Activated CD4-positive, alpha-beta T cell treated with anti-CD3 and anti-CD28 coated beads for 36 hours (primary cell): ENCODE measurements at regions of chr4 and their contacts with region 1.

Region 1: DNA sequence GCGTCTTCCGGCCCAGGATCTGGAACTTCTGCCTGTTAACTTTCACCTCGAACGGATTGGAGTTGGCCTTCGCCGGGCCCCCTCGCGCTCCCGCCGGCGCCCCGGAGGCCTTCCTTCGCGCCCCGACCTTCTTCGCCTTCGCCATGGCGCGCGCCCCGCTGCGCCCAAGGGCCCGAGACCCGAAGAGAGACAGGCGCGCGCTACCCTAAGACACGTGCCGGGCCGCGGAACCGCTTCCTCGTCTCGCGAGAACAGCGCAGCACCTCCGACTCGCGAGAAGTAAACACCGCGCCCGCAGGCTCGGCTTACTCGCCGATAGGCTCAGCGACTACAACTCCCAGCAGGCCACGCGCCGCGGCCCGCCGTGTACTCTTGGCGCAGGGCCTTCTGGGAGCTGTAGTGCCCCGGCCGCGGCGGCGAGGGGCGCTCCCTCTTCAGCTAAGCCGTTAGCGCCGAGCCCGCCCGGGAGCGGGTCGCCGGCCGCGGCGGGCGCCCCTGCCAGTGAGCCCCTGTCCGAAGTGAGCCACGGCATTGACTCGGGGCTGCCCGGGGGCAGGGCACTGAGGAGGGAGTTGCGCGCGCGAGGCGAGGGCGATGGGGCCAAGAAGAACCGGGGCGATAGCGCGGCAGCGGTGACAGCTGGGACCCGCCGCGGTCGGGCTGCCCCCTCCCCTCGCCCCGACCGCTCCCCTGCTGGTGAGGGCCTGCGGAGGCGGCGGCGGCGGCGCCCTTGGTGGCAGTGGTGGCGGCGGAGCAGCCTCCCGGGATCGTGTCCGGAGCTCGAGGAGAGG is at the starts of genes GRK4 and NOP14:
- DNase-seq: peak; percentile 99
- ATAC-seq: peak; percentile 87
- H3K4me3 Mint-ChIP-seq: peak within 1 kb of the TSS; percentile 83
- H3K27ac Mint-ChIP-seq: peak within 1 kb of the TSS; percentile 86
- H3K4me1 Mint-ChIP-seq: peaks cover 34% of the 10 kb centered on the region
- H3K27me3 Mint-ChIP-seq: no peaks in the 10 kb centered on the region
- total RNA-seq, gene GRK4: 2.4 to 2.5 TPM
- total RNA-seq, gene NOP14: 86.8 to 106 TPM

Region 2: DNA sequence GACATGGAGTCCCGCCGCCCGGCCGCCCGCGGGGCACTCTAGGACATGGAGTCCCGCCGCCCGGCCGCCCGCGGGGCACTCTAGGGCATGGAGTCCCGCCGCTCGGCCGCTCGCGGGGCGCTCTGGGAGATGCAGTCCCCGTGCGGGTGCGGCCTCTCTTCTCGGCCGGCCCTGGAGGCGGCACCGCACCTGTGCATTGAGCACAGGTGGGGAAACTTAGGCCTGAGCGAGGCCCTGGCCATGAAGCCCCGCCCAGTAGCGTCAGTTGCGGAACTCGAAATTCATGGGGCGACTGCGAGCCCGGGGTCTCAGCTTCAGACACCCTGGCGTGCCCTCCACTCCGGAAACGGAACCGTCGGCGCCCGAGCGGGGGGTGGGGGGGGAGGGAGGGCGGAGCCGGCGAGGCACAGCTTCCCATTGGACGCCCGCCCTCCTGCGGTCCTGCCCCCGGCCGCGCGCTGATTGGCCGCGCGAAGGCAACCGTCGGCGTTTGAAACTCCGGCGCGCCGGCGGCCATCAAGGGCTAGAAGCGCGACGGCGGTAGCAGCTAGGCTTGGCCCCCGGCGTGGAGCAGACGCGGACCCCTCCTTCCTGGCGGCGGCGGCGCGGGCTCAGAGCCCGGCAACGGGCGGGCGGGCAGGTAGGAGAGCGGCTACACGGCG is 1242.2 kb before region 1 on chr4 and contains the starts of genes TACC3 and TMEM129:
- CTCF ChIA-PET with region 1: no interaction called
- POLR2A ChIA-PET with region 1: no interaction called
- intact Hi-C with region 1: loop called in 1 of 2 experiments (anchors 5 kb)
- DNase-seq: peak; percentile 96
- ATAC-seq: peak; percentile 81
- H3K4me3 Mint-ChIP-seq: peak within 1 kb of the TSS; percentile 96
- H3K27ac Mint-ChIP-seq: peak within 1 kb of the TSS; percentile 99
- H3K4me1 Mint-ChIP-seq: peaks cover 52% of the 10 kb centered on the region
- H3K27me3 Mint-ChIP-seq: no peaks in the 10 kb centered on the region
- total RNA-seq, gene TACC3: 197 to 206 TPM
- total RNA-seq, gene TMEM129: 13.7 to 14.6 TPM

Region 3: GRCh38 chr4:2262143-2262943 is 701.0 kb before region 1 on chr4:
- CTCF ChIA-PET with region 1: no interaction called
- POLR2A ChIA-PET with region 1: no interaction called
- intact Hi-C with region 1: loop called in 1 of 2 experiments (anchors 5 kb)
- DNase-seq: peak; percentile 99
- ATAC-seq: peak; percentile 96
- H3K4me3 Mint-ChIP-seq: peak overlapping the region; percentile 61
- H3K27ac Mint-ChIP-seq: no peak overlapping the region
- H3K4me1 Mint-ChIP-seq: peaks cover 2% of the 10 kb centered on the region
- H3K27me3 Mint-ChIP-seq: no peaks in the 10 kb centered on the region

Region 4: GRCh38 chr4:2745981-2746806 is 217.2 kb before region 1 on chr4:
- CTCF ChIA-PET with region 1: no interaction called
- POLR2A ChIA-PET with region 1: interaction called, 8 read pairs
- intact Hi-C with region 1: loop called in 1 of 2 experiments (anchors 1 kb)
- DNase-seq: peak; percentile 98
- ATAC-seq: peak; percentile 97
- H3K4me3 Mint-ChIP-seq: peak overlapping the region; percentile 62
- H3K27ac Mint-ChIP-seq: peak overlapping the region; percentile 97
- H3K4me1 Mint-ChIP-seq: peaks cover 58% of the 10 kb centered on the region
- H3K27me3 Mint-ChIP-seq: no peaks in the 10 kb centered on the region

Region 5: GRCh38 chr4:2849267-2850152 is 113.9 kb before region 1 on chr4:
- CTCF ChIA-PET with region 1: interaction called, 4 read pairs
- POLR2A ChIA-PET with region 1: no interaction called
- intact Hi-C with region 1: loop called in 1 of 2 experiments (anchors 5 kb)
- DNase-seq: no peak
- ATAC-seq: no peak
- H3K4me3 Mint-ChIP-seq: no peak overlapping the region
- H3K27ac Mint-ChIP-seq: peak overlapping the region; percentile 28
- H3K4me1 Mint-ChIP-seq: peaks cover 85% of the 10 kb centered on the region
- H3K27me3 Mint-ChIP-seq: no peaks in the 10 kb centered on the region

Region 6: DNA sequence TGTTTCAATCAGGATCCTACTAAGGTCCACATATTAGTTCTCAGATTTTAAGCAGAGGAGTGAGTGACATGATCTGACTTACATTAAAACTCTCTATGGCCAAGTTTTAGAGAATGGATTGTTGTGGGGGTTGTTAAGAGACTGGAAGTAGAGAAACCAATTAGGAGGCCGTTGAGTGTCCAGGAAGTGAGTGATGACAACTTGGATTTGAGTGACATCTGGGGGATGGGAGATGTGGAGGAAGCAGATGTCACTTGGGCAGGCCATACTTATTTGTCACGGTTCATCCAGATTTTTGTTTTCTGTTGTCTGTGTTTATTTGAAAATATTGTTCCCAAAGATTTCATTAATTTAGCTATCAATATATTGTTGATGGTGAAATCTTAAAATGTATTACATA is 91.5 kb before region 1 on chr4:
- CTCF ChIA-PET with region 1: no interaction called
- POLR2A ChIA-PET with region 1: no interaction called
- intact Hi-C with region 1: no loop called
- DNase-seq: no peak
- ATAC-seq: peak; percentile 39
- H3K4me3 Mint-ChIP-seq: no peak overlapping the region
- H3K27ac Mint-ChIP-seq: peak overlapping the region; percentile 80
- H3K4me1 Mint-ChIP-seq: peaks cover 60% of the 10 kb centered on the region
- H3K27me3 Mint-ChIP-seq: no peaks in the 10 kb centered on the region

Region 7: GRCh38 chr4:3074078-3074795 is 110.9 kb after region 1 on chr4 and contains the starts of genes HTT and HTT-AS:
- CTCF ChIA-PET with region 1: interaction called, 3 read pairs
- POLR2A ChIA-PET with region 1: no interaction called
- intact Hi-C with region 1: loop called in 1 of 2 experiments (anchors 1 kb)
- DNase-seq: peak; percentile 100
- ATAC-seq: peak; percentile 89
- H3K4me3 Mint-ChIP-seq: peak within 1 kb of the TSS; percentile 95
- H3K27ac Mint-ChIP-seq: peak within 1 kb of the TSS; percentile 90
- H3K4me1 Mint-ChIP-seq: peaks cover 24% of the 10 kb centered on the region
- H3K27me3 Mint-ChIP-seq: no peaks in the 10 kb centered on the region
- total RNA-seq, gene HTT: 80.1 to 127 TPM
- total RNA-seq, gene HTT-AS: not detected

Region 8: DNA sequence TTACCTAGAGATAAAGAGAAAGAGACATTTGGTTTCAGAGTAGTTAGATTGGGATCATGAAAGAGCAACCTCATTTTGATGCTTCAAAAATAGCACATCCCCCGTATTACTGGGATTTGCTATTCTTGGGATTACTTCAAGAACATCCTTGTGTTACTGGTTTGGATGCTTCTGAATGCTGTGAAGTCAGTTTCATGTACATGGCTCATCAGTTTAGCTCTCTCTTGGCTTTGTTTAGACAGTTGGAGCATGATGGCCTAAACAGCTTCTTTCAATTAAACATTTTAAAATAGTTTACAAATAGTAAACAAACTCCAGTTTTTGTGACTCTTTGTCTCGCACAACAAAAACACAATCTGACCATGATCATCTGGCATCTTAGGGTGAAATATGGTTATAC is 135.0 kb after region 1 on chr4:
- CTCF ChIA-PET with region 1: no interaction called
- POLR2A ChIA-PET with region 1: no interaction called
- intact Hi-C with region 1: no loop called
- DNase-seq: no peak
- ATAC-seq: no peak
- H3K4me3 Mint-ChIP-seq: no peak overlapping the region
- H3K27ac Mint-ChIP-seq: peak overlapping the region; percentile 13
- H3K4me1 Mint-ChIP-seq: peaks cover 3% of the 10 kb centered on the region
- H3K27me3 Mint-ChIP-seq: no peaks in the 10 kb centered on the region

Region 9: DNA sequence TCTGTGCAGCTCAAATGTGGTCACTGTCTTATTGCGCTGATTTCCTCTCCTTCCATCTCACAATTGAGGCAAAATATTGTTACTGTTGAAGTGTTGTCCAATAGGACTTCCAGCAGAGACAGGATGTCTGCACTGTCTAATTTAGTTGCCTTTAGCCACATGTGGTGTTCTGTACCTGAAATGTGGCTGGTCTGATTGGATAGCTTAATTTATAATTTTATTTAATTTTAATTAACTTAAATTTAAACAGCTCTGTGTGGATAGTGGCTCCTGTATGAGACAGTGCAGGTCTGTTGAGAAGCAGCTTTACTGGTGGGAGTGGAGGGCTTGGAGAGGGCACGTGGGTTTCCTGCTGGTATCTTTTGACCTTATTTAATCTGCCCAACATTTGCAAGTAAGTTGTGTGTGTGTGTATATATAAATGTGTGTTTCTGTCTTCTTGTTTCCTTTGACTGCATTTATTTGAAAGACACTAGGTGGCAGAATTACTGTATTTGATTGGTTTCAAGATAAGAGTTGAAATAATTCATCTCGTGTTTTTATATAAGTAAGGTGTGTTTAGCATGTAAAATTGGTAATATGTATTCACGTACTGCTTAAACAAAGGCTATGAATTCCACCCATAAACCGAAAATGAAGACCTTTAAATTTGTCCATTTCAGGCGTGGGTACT is 230.3 kb after region 1 on chr4:
- CTCF ChIA-PET with region 1: no interaction called
- POLR2A ChIA-PET with region 1: no interaction called
- intact Hi-C with region 1: no loop called
- DNase-seq: no peak
- ATAC-seq: no peak
- H3K4me3 Mint-ChIP-seq: no peak overlapping the region
- H3K27ac Mint-ChIP-seq: no peak overlapping the region
- H3K4me1 Mint-ChIP-seq: peaks cover 51% of the 10 kb centered on the region
- H3K27me3 Mint-ChIP-seq: no peaks in the 10 kb centered on the region